Left ventricle myocardium inferior (tissue), 1 donor: ENCODE measurements at regions of chr5 and their contacts with region 1.

Region 1: DNA sequence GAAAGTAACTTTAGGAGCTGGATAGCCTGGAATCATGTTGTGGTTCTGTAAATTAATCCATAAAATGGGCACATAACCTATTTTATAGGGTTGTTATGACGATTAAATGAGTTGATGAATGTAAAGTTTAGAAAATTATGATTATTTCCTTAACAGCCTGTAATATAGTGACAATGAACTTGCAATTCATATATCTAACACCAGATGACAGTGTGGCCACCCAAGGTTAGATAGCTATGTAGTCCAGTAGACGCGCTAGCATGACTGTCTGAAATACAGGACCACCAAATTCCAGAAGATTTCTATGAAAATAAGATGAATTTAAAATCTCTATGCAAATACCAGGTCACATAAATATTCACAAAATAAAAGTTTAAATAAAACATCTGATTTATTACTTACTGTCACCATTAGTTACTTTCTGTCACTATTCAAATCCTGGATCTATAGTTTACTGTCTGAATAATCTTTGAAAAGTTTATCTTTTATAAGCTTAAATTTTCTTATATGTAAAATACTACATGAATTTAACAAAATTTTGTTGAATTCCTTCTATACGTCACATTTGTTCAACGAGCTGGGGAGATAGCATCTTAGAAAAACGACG is 26.1 kb upstream of the MACIR start:
- DNase-seq: no peak
- H3K4me3 ChIP-seq: no peak overlapping the region
- H3K27ac ChIP-seq: no peak overlapping the region
- H3K4me1 ChIP-seq: no peaks in the 10 kb centered on the region
- H3K27me3 ChIP-seq: no peaks in the 10 kb centered on the region
- CTCF ChIP-seq: peak; percentile 94

Region 2: GRCh38 chr5:103120607-103121200 is 111.8 kb before region 1 on chr5:
- intact Hi-C with region 1: no loop called
- DNase-seq: no peak
- H3K4me3 ChIP-seq: peak overlapping the region; percentile 86
- H3K27ac ChIP-seq: peak overlapping the region; percentile 97
- H3K4me1 ChIP-seq: peaks cover 68% of the 10 kb centered on the region
- H3K27me3 ChIP-seq: no peaks in the 10 kb centered on the region
- CTCF ChIP-seq: no peak

Region 3: GRCh38 chr5:103166706-103167105 is 65.8 kb before region 1 on chr5:
- intact Hi-C with region 1: no loop called
- DNase-seq: no peak
- H3K4me3 ChIP-seq: no peak overlapping the region
- H3K27ac ChIP-seq: no peak overlapping the region
- H3K4me1 ChIP-seq: peaks cover 6% of the 10 kb centered on the region
- H3K27me3 ChIP-seq: no peaks in the 10 kb centered on the region
- CTCF ChIP-seq: no peak

Region 4: DNA sequence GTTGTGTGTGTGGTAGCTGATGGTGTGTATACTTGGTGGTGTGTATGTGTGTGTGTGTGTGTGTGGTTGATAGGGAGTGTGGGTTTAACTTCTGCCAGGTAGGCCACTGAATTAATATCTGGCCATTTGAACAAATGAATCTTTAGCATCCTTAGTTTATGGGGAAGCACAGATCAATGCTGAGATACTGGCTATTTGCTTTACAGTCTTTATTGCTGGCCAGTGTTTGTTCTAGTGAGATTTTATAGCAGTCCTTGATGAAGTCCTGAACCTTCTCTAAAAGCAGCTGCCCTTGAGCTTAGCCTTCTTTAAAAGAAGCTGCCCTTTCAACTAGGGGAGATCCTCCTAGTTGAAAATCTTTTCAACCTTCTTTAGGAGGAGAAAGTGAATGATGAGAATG is 95.4 kb after region 1 on chr5:
- intact Hi-C with region 1: no loop called
- DNase-seq: no peak
- H3K4me3 ChIP-seq: no peak overlapping the region
- H3K27ac ChIP-seq: no peak overlapping the region
- H3K4me1 ChIP-seq: no peaks in the 10 kb centered on the region
- H3K27me3 ChIP-seq: no peaks in the 10 kb centered on the region
- CTCF ChIP-seq: no peak

Region 5: GRCh38 chr5:103475629-103476240 is 243.2 kb after region 1 on chr5:
- intact Hi-C with region 1: loop called (anchors 2 kb)
- DNase-seq: no peak
- H3K4me3 ChIP-seq: no peak overlapping the region
- H3K27ac ChIP-seq: no peak overlapping the region
- H3K4me1 ChIP-seq: no peaks in the 10 kb centered on the region
- H3K27me3 ChIP-seq: no peaks in the 10 kb centered on the region
- CTCF ChIP-seq: peak; percentile 77

Region 6: GRCh38 chr5:103532086-103532734 is 299.7 kb after region 1 on chr5:
- intact Hi-C with region 1: no loop called
- DNase-seq: no peak
- H3K4me3 ChIP-seq: no peak overlapping the region
- H3K27ac ChIP-seq: no peak overlapping the region
- H3K4me1 ChIP-seq: no peaks in the 10 kb centered on the region
- H3K27me3 ChIP-seq: no peaks in the 10 kb centered on the region
- CTCF ChIP-seq: no peak